ENCODE measurements at regions of chr1 and their contacts with region 1.

Region 1: DNA sequence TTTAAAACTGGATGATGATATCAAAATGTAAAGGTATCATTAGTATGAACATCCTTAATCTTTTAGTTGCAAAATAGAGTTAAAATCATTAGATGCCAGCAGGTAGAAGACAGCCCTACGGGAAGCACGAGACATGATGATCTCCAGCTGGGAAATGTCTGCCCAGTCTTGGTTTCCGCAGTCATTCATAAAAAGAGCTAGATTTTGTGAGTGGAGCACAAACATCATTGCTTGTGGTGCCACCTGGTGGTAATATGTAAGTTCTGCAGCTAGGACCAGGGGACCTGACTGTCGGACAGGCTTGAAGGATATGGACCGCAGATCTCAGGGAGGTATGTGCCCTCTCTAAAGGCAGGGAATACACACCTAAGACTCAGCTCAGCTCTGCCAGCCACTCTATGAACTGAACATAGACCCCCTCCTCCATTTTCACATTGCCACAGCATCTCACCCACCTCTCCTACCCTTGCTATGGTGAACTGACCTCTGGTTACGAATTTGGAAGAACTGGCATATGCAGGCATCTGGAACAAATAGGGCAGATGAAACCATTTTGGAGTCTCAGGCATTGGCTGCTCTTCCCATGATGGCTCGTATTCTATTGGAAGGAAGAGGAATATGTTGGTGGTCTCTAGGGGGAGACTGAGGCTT is 9.2 kb downstream of the FCMR start:
- DNase-seq: no peak
- H3K4me3 ChIP-seq: no peak overlapping the region
- CTCF ChIP-seq: peak; percentile 73

Region 2: DNA sequence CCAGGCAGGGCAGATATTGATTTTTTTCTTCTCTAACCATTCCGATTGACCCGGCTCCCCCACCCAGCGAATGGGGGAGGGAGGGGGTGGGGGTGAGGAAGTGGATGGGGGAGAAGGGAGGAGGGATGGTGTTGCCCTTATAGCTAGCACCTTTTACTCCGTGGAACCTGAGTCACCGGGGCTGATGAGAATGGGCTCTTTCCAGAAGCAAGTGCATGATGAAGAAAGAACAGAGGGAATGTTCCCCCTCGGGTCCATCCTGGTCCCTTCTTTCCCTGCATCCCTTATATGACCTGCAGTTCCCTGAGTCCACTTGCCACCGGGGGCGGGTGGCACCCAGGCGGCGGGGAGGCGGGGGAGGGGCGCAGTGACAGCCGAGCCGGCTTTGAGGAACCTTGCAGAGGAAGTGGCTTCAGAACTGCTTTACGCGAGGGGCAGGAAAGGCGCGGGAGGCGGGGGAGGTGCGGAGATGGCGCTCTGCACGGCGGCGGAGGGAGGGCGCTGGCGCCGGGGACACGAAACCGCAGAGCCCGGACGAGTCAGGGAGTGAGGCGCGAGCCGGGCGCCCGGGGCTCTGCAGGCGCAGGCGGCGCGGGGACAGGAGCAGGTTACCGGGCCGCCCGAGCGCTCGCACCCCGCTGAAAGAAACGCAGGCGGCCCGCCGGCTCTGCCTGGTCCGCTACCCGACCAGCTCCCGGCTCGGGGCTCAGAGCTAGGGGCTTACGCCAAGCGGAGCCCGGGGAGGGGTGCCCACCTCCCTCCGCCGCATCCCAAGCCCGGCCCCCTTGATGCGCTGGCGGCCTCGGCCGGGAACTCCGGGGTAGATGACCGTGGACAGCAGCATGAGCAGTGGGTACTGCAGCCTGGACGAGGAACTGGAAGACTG is 355.6 kb before region 1 on chr1:
- CTCF ChIA-PET with region 1: no interaction called
- POLR2A ChIA-PET with region 1: no interaction called
- DNase-seq: no peak
- H3K4me3 ChIP-seq: peak overlapping the region; percentile 53
- CTCF ChIP-seq: no peak

Region 3: GRCh38 chr1:206635080-206635977 is 277.2 kb before region 1 on chr1 and contains the start of gene DYRK3:
- CTCF ChIA-PET with region 1: interaction called, 74 read pairs
- POLR2A ChIA-PET with region 1: no interaction called
- DNase-seq: no peak
- H3K4me3 ChIP-seq: peak within 1 kb of the TSS; percentile 86
- CTCF ChIP-seq: no peak

Region 4: GRCh38 chr1:206725109-206725963 is 187.2 kb before region 1 on chr1:
- CTCF ChIA-PET with region 1: interaction called, 490 read pairs
- POLR2A ChIA-PET with region 1: no interaction called
- DNase-seq: no peak
- H3K4me3 ChIP-seq: no peak overlapping the region
- CTCF ChIP-seq: peak; percentile 74

Region 5: GRCh38 chr1:206797534-206798383 is 114.8 kb before region 1 on chr1:
- CTCF ChIA-PET with region 1: interaction called, 272 read pairs
- POLR2A ChIA-PET with region 1: no interaction called
- DNase-seq: no peak
- H3K4me3 ChIP-seq: no peak overlapping the region
- CTCF ChIP-seq: peak; percentile 50

Region 6: DNA sequence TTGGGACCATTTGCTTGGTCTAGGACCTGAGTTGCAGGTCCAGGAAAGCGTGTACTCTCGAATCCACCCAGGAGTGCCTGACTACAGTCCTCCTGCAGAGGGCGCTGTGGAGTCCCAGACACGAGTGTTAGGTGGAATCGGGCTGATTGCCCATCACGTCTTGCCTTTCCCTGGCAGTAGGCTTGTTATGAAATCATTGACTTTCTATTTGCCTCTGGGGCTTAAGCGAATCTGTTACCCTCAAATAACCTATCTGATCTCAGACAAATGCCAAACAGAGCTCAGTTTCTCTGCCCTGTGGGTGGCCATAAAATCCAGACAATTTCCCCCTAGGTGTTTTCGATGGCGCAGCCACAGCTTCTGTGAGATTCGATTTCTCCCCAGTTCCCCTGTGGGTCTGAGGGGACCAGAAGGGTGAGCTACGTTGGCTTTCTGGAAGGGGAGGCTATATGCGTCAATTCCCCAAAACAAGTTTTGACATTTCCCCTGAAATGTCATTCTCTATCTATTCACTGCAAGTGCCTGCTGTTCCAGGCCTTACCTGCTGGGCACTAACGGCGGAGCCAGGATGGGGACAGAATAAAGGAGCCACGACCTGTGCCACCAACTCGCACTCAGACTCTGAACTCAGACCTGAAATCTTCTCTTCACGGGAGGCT is 47.4 kb before region 1 on chr1 and contains the start of gene IL20:
- CTCF ChIA-PET with region 1: interaction called, 53 read pairs
- POLR2A ChIA-PET with region 1: no interaction called
- DNase-seq: peak; percentile 40
- H3K4me3 ChIP-seq: no peak within 1 kb of the TSS
- CTCF ChIP-seq: peak; percentile 90

Region 7: DNA sequence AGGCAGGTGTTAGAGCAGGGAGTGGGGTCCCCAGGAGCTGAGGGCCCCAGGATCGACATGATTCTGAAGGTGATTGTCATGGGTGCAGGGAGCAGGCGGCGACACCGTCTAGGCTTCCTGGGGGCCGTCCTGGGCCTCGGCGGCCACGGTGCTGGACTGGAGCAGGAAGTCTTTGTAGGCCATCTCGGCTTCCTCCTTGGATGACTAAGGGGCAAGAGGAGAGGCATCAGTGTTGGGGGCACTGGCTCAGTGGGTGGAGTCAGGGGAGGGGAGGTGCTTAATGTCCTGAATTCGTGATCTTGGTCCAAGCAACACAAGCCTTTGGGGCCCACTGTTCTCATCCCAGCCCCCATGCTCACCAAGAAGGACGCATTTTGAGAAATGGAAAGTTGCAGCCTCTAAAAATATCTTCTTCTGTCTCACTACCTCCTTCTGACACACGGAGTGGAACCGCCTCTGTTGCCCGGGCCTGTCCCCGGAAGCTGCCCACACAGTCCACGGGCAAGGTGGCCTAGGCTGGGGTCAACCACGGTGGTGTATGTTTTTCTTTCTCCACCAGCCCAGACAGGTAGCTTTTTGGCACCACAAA is 17.7 kb after region 1 on chr1:
- CTCF ChIA-PET with region 1: interaction called, 32 read pairs
- POLR2A ChIA-PET with region 1: no interaction called
- DNase-seq: no peak
- H3K4me3 ChIP-seq: no peak overlapping the region
- CTCF ChIP-seq: no peak